ENCODE measurements at regions of chr10 and their contacts with region 1.

Region 1: GRCh38 chr10:31836569-31837406 is 91.8 kb downstream of the ARHGAP12 start:
- DNase-seq: peak; percentile 51
- ATAC-seq: peak; percentile 57
- H3K4me3 ChIP-seq: no peak overlapping the region
- H3K27ac ChIP-seq: no peak overlapping the region
- H3K4me1 ChIP-seq: no peaks in the 10 kb centered on the region
- H3K27me3 ChIP-seq: no peaks in the 10 kb centered on the region
- CTCF ChIP-seq: peak; percentile 85

Region 2: GRCh38 chr10:30687698-30688219 is 1149.0 kb before region 1 on chr10:
- CTCF ChIA-PET with region 1: no interaction called
- POLR2A ChIA-PET with region 1: no interaction called
- intact Hi-C with region 1: no loop called
- DNase-seq: peak; percentile 82
- ATAC-seq: peak; percentile 92
- H3K4me3 ChIP-seq: no peak overlapping the region
- H3K27ac ChIP-seq: no peak overlapping the region
- H3K4me1 ChIP-seq: peaks cover 17% of the 10 kb centered on the region; the same call in 1 of the 2 replicates
- H3K27me3 ChIP-seq: no peaks in the 10 kb centered on the region
- CTCF ChIP-seq: peak; percentile 83

Region 3: DNA sequence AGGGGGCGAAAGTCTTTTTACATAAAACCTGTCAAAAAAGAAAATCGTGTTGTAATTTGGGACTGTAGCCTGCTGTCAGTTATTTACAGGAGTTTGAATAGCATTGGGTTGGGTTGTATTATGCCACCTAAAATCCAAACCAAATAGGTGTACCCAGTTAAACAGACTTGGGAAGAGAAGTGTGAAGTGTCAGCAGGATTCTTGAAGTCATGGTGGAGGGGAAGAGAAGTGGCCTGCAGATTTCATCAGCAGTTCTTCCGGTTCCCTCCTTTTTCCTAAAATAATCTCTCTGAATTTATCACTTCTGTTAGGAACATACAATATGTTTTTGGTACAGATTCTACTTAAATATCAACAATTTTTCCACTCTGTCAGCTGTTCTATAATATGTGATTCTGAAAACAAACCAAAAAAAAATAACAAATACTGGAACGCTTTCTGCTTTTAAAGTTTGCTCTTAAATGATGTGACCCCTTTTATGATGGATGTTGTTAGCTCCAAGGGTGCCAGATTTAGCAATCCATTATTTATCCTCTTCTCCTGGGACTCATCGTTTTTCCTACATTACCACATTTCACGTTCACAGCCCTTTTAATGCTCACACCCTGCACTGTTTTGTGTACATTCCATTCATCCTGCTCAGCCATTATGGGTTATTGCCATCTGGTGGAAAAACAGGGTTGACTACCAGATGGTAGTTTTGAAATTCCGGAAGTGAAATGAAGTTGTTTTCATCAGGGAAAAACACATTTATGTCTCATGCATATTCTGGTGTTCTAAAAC is 110.5 kb after region 1 on chr10:
- CTCF ChIA-PET with region 1: no interaction called
- POLR2A ChIA-PET with region 1: no interaction called
- intact Hi-C with region 1: loop called (anchors 1 kb)
- DNase-seq: peak; percentile 86
- ATAC-seq: peak; percentile 76
- H3K4me3 ChIP-seq: peak overlapping the region; percentile 35; the same call in 1 of the 2 replicates
- H3K27ac ChIP-seq: peak overlapping the region; percentile 13; the same call in 1 of the 2 replicates
- H3K4me1 ChIP-seq: peaks cover 47% of the 10 kb centered on the region
- H3K27me3 ChIP-seq: no peaks in the 10 kb centered on the region
- CTCF ChIP-seq: peak; percentile 69

Region 4: GRCh38 chr10:32005050-32005449 is 168.3 kb after region 1 on chr10:
- CTCF ChIA-PET with region 1: no interaction called
- POLR2A ChIA-PET with region 1: no interaction called
- intact Hi-C with region 1: loop called (anchors 5 kb)
- DNase-seq: peak; percentile 72
- ATAC-seq: peak; percentile 76
- H3K4me3 ChIP-seq: no peak overlapping the region
- H3K27ac ChIP-seq: no peak overlapping the region
- H3K4me1 ChIP-seq: no peaks in the 10 kb centered on the region
- H3K27me3 ChIP-seq: no peaks in the 10 kb centered on the region
- CTCF ChIP-seq: peak; percentile 70